Activated naive CD4-positive, alpha-beta T cell treated with anti-CD3 and anti-CD28 coated beads for 36 hours (primary cell): ENCODE measurements at regions of chr16 and their contacts with region 1.

Region 1: DNA sequence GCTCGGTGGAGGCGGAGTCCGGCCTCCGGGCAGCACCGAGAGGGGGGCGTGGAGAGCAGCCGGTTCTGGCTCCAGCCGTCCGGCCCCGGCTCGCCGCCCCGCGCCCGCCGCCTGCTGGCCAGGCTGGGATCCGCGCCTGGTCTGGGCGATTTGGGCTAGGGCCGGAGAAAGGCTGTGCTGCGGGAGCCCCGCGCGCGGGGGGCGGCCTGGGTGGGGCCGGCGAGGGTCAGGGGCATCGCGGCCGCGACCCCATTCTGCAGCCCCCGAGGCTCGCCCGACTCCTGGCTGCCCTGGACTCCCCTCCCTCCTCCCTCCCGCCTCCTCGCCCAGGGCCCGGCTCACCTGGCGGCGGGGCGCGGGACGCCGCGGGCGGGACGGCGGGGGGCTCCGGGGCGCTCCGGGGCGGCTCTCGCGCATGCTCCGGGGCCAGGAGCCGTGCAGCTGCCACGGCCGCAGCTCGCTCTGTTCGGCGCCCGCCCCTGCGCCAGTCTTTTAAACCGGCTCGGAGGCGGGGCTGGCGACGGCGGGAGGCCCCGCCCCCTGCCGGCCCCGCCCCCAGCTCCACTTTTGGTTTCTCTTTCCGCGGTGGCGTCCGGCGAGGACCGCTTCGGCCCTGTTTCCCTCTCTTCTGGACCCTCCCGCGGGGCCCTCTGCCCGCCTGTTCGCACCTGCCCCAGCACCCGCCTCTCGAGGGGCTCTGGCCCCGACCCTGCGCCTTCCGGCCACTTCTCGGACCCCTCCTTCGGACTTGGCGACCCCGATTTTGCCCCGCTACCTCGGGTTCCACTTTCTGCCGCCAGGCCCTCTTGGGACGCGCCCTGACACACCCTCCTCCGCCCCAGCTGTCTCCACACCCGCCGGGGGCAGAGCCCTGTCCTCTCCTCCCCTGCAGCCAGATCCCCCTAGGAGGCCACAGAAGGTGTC is at the start of gene SOCS1:
- DNase-seq: peak; percentile 85
- H3K4me3 Mint-ChIP-seq: peak within 1 kb of the TSS; percentile 95
- H3K27ac Mint-ChIP-seq: peak within 1 kb of the TSS; percentile 99
- H3K4me1 Mint-ChIP-seq: peaks cover 36% of the 10 kb centered on the region
- H3K27me3 Mint-ChIP-seq: no peaks in the 10 kb centered on the region
- total RNA-seq, gene SOCS1: 45.1 to 45.6 TPM

Region 2: DNA sequence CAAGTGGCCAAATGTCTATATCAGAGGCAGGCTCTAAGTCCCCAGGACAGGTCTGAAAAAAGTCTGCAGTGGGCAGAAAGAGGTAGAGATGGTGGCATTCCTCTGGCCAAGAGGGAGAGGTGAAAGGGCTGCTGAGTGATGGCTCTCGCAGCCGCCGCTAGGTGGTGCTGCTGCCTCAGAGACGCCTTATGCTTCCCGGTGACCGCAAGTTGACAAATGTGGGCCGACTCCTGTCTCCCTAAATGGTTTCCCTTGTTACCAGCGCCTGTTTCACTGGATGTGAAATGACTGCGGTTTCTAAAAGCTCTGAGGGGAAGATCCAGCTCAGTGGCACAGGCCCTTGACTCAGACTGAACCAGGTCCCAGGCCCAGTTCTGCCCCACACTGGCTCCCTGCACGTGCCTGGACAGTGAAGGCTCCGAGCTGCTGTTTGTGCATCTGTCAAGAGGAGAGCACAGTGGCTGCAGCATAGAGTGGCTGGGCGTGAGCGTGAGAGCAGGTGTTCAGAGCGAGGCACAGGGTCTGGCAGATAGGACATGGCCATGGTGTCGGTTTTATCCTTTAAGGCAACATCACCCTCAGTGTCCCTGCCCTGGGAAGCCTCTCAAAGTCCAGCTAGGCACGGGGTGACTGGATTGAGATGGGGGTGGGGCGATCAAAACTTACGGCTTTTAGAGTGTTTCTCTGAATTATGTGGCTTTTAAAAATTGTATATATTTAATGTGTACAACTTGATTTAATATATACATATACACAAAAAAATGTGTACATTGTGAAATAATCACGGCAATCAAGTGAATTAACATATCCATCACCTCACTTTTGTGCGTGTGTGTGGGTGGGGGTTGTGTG is 291.7 kb before region 1 on chr16:
- CTCF ChIA-PET with region 1: interaction called, 57 read pairs
- intact Hi-C with region 1: loop called (anchors 1 kb)
- DNase-seq: peak; percentile 92
- H3K4me3 Mint-ChIP-seq: peak overlapping the region; percentile 43
- H3K27ac Mint-ChIP-seq: peak overlapping the region; percentile 92
- H3K4me1 Mint-ChIP-seq: peaks cover 39% of the 10 kb centered on the region
- H3K27me3 Mint-ChIP-seq: no peaks in the 10 kb centered on the region

Region 3: GRCh38 chr16:10988164-10988803 is 267.7 kb before region 1 on chr16:
- CTCF ChIA-PET with region 1: interaction called, 25 read pairs
- intact Hi-C with region 1: loop called (anchors 1 kb)
- DNase-seq: peak; percentile 95
- H3K4me3 Mint-ChIP-seq: peak overlapping the region; percentile 22
- H3K27ac Mint-ChIP-seq: peak overlapping the region; percentile 87
- H3K4me1 Mint-ChIP-seq: peaks cover 79% of the 10 kb centered on the region
- H3K27me3 Mint-ChIP-seq: no peaks in the 10 kb centered on the region

Region 4: DNA sequence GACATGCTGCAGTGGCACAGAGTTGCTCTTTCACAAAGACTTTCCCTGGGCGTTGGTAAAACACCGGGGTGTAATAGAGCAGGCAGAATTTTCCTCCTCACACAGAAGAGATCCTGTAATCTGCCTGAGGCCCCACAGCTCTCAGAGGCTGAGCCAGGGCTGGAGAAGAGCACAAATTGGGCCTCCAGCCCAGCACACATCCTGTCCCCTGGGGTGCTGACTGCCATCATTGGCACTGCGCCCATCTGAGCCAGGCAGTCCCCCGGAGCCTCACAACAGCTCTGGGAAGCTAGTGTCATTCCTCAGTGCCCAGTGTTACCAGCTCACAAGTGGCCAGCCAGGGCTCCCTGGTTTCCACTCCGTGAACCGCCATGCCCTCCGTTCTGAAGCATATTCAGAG is 119.4 kb before region 1 on chr16:
- CTCF ChIA-PET with region 1: no interaction called
- intact Hi-C with region 1: no loop called
- DNase-seq: no peak
- H3K4me3 Mint-ChIP-seq: no peak overlapping the region
- H3K27ac Mint-ChIP-seq: no peak overlapping the region
- H3K4me1 Mint-ChIP-seq: peaks cover 53% of the 10 kb centered on the region
- H3K27me3 Mint-ChIP-seq: no peaks in the 10 kb centered on the region

Region 5: GRCh38 chr16:11190588-11191560 is 65.1 kb before region 1 on chr16:
- CTCF ChIA-PET with region 1: interaction called, 3 read pairs
- intact Hi-C with region 1: loop called (anchors 1 kb)
- DNase-seq: peak; percentile 45
- H3K4me3 Mint-ChIP-seq: no peak overlapping the region
- H3K27ac Mint-ChIP-seq: no peak overlapping the region
- H3K4me1 Mint-ChIP-seq: peaks cover 16% of the 10 kb centered on the region
- H3K27me3 Mint-ChIP-seq: no peaks in the 10 kb centered on the region

Region 6: DNA sequence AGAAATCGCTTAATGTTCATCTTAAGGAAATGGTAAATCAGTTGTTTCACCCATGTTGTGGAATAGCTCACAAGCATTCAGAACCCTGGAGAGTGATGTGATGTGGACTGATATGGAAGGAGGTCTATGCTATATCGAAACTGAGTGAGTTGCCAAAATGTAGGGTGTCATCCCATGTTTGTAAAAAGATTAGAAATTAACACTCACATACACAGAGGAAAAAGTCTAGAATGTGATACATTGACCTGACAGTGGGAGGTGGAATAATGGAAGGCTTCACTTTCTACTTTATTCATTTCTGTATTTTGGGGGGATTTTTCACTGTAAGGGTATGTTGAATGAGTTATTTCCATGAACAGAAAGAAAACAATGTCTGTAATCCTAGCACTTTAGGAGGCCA is 29.8 kb after region 1 on chr16:
- CTCF ChIA-PET with region 1: interaction called, 6 read pairs
- intact Hi-C with region 1: loop called (anchors 2 kb)
- DNase-seq: no peak
- H3K4me3 Mint-ChIP-seq: no peak overlapping the region
- H3K27ac Mint-ChIP-seq: peak overlapping the region; percentile 67
- H3K4me1 Mint-ChIP-seq: peaks cover 25% of the 10 kb centered on the region
- H3K27me3 Mint-ChIP-seq: no peaks in the 10 kb centered on the region

Region 7: DNA sequence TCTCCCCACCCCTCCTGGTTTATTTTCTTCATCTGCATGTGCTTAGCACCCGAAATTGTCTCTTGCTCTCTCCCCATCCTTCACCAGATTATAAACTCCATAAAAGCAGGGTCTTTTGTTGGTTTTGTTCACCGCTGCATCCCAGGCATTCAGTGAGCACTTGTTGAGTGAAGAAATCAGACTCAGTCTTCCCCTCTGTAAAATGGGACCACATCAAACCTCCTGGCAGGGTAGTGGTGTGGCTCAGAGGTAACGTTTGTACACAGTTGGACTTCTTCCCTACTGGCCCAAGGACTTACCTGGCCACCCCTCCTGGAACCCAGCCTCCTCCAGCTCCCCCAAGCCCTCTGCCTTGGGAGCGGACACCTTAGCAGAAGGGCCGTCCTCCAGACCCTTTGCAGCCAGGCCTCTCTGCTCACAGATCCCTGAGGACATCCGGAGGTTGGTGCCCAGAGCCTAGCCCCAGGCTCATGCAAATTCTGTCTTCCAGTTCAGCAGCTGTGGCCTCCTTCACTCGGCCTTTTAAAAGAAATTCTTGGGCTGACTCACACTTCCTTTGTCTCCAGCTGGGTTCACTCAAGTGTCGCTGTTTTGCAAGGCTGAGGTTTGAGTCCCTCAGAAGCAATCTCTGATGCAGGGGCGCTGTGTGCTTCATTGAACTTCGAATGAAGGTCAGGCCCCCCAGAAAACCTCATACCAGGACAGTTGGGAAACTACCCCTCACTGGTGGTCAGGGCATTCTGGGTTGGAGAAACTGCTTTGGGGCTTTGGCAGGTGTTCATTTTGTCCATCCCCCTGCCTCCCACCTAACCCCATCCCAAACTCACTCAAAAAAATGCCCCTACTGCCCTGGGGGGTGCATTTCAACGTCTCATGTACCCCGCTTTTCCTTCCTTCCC is 72.4 kb after region 1 on chr16:
- CTCF ChIA-PET with region 1: interaction called, 4 read pairs
- intact Hi-C with region 1: loop called (anchors 2 kb)
- DNase-seq: peak; percentile 75
- H3K4me3 Mint-ChIP-seq: peak overlapping the region; percentile 36
- H3K27ac Mint-ChIP-seq: peak overlapping the region; percentile 13
- H3K4me1 Mint-ChIP-seq: peaks cover 47% of the 10 kb centered on the region
- H3K27me3 Mint-ChIP-seq: no peaks in the 10 kb centered on the region

Region 8: DNA sequence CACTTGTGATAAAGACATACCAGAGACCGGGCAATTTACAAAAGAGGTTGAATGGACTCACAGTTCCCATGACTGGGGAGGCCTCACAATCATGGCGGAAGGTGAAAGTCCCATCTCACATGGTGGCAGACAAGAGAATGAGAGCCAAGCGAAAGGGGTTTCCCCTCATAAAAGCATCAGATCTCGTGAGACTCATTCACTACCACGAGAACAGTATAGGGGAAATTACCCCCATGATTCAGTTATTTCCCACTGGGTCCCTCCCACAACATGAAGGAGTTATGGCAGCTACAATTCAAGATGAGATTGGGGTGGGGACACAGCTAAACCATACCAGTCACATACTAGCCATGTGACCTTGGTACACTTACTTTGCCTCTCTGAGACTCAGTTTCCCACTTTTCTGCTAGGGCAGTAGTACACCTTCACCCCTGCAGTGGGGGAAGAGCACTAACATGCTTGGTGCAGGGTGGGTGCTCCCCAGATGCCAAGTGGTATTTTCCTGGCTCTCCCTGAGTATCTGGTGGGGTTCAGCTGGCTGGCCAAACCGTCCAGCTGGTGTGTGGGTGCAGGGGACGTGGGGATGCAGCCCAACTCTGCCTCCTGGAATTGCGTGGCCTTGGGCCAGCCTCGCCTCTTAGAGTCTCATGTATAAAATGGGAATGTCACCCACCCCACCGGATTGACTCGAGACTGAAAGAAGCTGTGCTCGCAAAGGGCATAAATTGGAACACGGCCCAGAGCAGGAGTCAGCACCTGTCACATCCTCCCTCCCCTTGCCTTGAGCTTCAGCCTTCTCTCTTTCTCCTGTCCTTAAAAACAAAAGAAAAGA is 1183.6 kb after region 1 on chr16:
- CTCF ChIA-PET with region 1: no interaction called
- intact Hi-C with region 1: no loop called
- DNase-seq: peak; percentile 57
- H3K4me3 Mint-ChIP-seq: no peak overlapping the region
- H3K27ac Mint-ChIP-seq: no peak overlapping the region
- H3K4me1 Mint-ChIP-seq: peaks cover 19% of the 10 kb centered on the region
- H3K27me3 Mint-ChIP-seq: no peaks in the 10 kb centered on the region